Activated CD8-positive, alpha-beta T cell treated with anti-CD3 and anti-CD28 coated beads, Interleukin-2, amount 10 ng/mL, durations not matched to agents 7 days and 5 days (primary cell): ENCODE measurements at regions of chrX and their contacts with region 1.

Region 1: DNA sequence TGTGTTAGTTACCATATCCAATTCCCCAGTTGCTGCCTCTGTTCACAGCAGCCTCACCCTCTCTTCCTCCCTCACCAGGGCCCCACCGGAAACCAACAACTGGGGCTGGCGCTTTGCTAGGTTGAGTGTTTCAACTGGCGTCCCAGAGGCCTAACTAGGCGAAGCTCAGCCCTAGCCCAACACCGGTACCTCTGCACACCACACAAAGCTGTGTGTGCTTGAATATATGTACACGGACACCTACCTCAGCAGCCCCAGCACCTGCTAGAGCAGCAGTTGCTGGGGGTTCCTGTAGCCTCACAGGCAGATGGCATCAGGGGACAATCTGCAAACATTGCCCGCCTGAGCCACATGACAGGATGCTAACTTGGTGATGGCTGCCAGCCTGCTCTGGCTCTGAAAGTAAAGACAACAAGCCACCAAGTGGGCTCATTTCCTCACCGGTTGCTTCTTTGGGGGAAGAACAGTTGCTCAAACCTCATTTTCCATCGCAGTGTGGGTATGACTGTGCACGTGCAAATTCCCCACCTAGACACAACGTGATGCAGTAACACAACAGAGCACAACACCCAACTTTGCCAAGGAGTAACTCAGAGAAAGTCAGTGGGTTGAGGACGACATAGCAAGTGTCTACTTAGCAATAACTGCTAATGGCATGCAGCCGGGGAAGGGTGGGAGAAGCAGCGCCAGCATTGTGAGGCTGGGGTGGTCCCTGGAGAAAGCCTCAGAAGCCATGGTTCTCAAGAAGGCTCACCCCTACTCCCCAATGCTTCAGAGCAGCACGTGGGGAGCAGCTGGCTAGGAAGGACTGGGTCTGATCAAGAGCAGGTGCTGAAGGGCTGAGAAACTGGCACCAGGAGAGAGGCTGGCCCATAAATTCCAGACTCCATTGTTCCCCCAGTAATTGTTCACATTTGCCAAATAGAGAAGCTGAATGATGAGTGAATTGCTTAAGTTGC is 139.5 kb downstream of the SH3KBP1 start:
- DNase-seq: peak; percentile 87
- ATAC-seq: peak; percentile 81
- H3K4me3 Mint-ChIP-seq: peak overlapping the region; percentile 67
- H3K27ac Mint-ChIP-seq: peak overlapping the region; percentile 98
- H3K4me1 Mint-ChIP-seq: peaks cover 95% of the 10 kb centered on the region
- H3K27me3 Mint-ChIP-seq: no peaks in the 10 kb centered on the region

Region 2: DNA sequence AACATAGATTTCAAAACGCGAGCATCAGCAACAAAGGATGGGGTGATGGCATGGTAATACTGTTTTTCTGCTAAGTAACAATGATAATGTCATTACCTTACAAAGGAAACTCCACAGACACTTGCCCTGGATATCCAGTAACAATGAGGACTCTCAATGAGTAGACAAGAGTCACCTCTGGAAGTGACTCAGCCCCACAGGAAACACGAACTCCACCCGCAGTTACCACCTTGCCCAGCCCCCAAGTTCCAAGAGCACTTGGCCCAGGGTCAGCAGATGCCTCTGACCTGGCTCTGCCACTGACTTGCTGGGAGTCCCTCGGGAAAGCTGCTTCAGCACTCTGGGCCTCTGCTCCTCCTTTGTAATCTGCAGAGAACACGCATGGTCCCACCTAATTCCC is 122.3 kb before region 1 on chrX:
- CTCF ChIA-PET with region 1: no interaction called
- POLR2A ChIA-PET with region 1: no interaction called
- DNase-seq: peak; percentile 56
- ATAC-seq: peak; percentile 82
- H3K4me3 Mint-ChIP-seq: peak overlapping the region; percentile 31
- H3K27ac Mint-ChIP-seq: peak overlapping the region; percentile 83
- H3K4me1 Mint-ChIP-seq: peaks cover 61% of the 10 kb centered on the region
- H3K27me3 Mint-ChIP-seq: no peaks in the 10 kb centered on the region

Region 3: DNA sequence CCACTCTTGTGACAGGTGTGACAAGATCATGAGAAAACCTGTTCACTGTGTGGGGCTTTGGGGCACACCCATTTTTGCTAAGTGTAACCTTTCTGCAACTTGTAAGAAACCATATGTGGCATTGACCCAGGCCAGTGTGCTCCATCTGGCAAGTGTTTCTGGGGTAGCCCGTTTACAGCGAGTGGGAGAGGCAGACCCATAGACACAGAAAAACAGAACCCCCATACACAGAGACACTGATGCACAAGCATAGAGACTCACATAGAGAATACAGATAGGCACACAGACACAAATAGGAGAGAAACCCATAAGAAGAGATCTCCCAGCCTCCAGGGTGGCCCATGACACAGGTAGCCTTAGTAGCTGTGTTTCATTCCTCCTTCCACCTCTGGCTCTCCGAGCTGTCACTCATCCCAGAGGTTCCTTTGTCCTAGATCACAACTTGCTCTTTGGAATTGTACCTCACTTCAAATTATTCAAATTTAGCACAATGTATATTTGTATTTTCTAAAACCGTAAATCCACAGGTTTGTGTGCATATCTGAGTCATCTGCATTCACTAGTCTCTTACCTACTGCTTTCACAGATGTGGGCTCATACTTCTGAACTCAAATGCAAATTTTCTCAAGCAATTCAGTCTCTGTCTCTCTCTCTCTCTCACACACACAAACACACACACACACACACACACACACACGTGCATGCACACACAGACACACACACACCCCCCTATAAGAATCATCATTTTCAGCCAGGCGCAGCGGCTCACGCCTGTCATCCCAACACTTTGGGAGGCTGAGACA is 25.1 kb after region 1 on chrX:
- CTCF ChIA-PET with region 1: interaction called, 11 read pairs
- POLR2A ChIA-PET with region 1: interaction called, 6 read pairs
- DNase-seq: peak; percentile 21
- ATAC-seq: peak; percentile 34
- H3K4me3 Mint-ChIP-seq: peak overlapping the region; percentile 57
- H3K27ac Mint-ChIP-seq: peak overlapping the region; percentile 81
- H3K4me1 Mint-ChIP-seq: peaks cover 74% of the 10 kb centered on the region
- H3K27me3 Mint-ChIP-seq: no peaks in the 10 kb centered on the region

Region 4: GRCh38 chrX:19862634-19863211 is 114.8 kb after region 1 on chrX:
- CTCF ChIA-PET with region 1: no interaction called
- POLR2A ChIA-PET with region 1: no interaction called
- DNase-seq: no peak
- ATAC-seq: no peak
- H3K4me3 Mint-ChIP-seq: no peak overlapping the region
- H3K27ac Mint-ChIP-seq: no peak overlapping the region
- H3K4me1 Mint-ChIP-seq: peaks cover 56% of the 10 kb centered on the region
- H3K27me3 Mint-ChIP-seq: no peaks in the 10 kb centered on the region